Natural killer cell (primary cell): ENCODE measurements at regions of chr17 and their contacts with region 1.

Region 1: GRCh38 chr17:8156246-8156992 is 4.2 kb upstream of the PER1 start:
- DNase-seq: peak; percentile 100
- ATAC-seq: peak; percentile 65 to 92 (median 76)
- H3K4me3 ChIP-seq: peak overlapping the region; percentile 47
- H3K4me3 Mint-ChIP-seq: no peak overlapping the region
- H3K27ac ChIP-seq: peak overlapping the region; percentile 100
- H3K27ac Mint-ChIP-seq: no peak overlapping the region
- H3K4me1 ChIP-seq: peaks cover 90% of the 10 kb centered on the region
- H3K4me1 Mint-ChIP-seq: peaks cover 33 to 54% of the 10 kb centered on the region in 2 donors
- H3K27me3 ChIP-seq: no peaks in the 10 kb centered on the region
- H3K27me3 Mint-ChIP-seq: no peaks in the 10 kb centered on the region
- CTCF ChIP-seq: no peak

Region 2: DNA sequence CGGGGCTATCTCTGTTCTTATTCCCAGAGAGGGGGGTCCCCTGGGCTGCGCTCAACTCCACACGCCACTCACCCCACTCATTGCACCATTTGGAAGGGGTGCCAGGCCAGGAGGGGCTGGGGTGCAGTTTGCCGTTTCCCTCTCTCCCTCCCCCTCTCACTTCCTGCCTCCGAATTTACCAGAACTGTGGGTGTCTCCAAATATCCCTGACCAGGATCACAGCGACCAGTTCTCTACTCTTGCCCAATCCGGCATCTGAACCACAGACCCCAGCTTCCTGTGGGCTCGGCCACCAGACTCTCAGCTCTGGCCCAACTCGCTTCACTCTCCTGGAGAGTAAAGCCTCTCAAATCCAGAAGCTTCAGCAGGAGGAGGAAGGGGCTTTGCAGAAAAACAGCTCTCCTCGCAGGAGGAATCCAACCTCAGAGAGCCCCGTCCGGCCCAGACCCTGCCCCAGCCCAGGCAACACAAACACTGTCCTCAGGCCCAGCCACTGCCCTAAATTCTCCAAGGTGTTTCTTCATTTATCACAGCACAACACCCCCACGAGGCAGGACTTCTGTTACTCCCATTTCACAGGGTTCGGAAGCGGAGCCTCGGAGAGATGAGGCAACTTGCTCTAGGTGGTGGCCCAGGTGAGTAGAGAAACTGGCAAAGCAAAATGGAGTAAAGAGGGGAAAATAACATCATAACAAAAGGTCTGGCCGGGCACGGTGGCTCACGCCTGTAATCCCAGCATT is 1041.4 kb before region 1 on chr17:
- intact Hi-C with region 1: no loop called
- DNase-seq: no peak
- ATAC-seq: peak in 2 of 3 donors; percentile 26 to 36
- H3K4me3 ChIP-seq: no peak overlapping the region
- H3K4me3 Mint-ChIP-seq: no peak overlapping the region
- H3K27ac ChIP-seq: no peak overlapping the region
- H3K27ac Mint-ChIP-seq: no peak overlapping the region
- H3K4me1 ChIP-seq: peaks cover 21% of the 10 kb centered on the region
- H3K4me1 Mint-ChIP-seq: peaks cover 7 to 12% of the 10 kb centered on the region in 2 donors
- H3K27me3 ChIP-seq: no peaks in the 10 kb centered on the region
- H3K27me3 Mint-ChIP-seq: peaks cover 5 to 9% of the 10 kb centered on the region in 2 donors
- CTCF ChIP-seq: no peak

Region 3: GRCh38 chr17:8091033-8091687 is 65.3 kb before region 1 on chr17:
- intact Hi-C with region 1: loop called (anchors 1 kb)
- DNase-seq: no peak
- ATAC-seq: no peak
- H3K4me3 ChIP-seq: no peak overlapping the region
- H3K4me3 Mint-ChIP-seq: no peak overlapping the region
- H3K27ac ChIP-seq: no peak overlapping the region
- H3K27ac Mint-ChIP-seq: no peak overlapping the region
- H3K4me1 ChIP-seq: peaks cover 10% of the 10 kb centered on the region
- H3K4me1 Mint-ChIP-seq: peaks cover 4% of the 10 kb centered on the region in 2 donors
- H3K27me3 ChIP-seq: no peaks in the 10 kb centered on the region
- H3K27me3 Mint-ChIP-seq: peaks cover 23 to 38% of the 10 kb centered on the region in 2 donors
- CTCF ChIP-seq: no peak

Region 4: GRCh38 chr17:8118769-8119580 is 37.4 kb before region 1 on chr17:
- intact Hi-C with region 1: loop called (anchors 1 kb)
- DNase-seq: peak; percentile 84 to 90
- ATAC-seq: peak; percentile 62 to 79 (median 68)
- H3K4me3 ChIP-seq: peak overlapping the region; percentile 91
- H3K4me3 Mint-ChIP-seq: peak overlapping the region; percentile 93
- H3K27ac ChIP-seq: peak overlapping the region; percentile 76
- H3K27ac Mint-ChIP-seq: peak overlapping the region; percentile 98 to 100
- H3K4me1 ChIP-seq: peaks cover 57% of the 10 kb centered on the region
- H3K4me1 Mint-ChIP-seq: peaks cover 55 to 56% of the 10 kb centered on the region in 2 donors
- H3K27me3 ChIP-seq: peaks cover 48% of the 10 kb centered on the region
- H3K27me3 Mint-ChIP-seq: peaks cover 51 to 55% of the 10 kb centered on the region in 2 donors
- CTCF ChIP-seq: peak; percentile 89

Region 5: DNA sequence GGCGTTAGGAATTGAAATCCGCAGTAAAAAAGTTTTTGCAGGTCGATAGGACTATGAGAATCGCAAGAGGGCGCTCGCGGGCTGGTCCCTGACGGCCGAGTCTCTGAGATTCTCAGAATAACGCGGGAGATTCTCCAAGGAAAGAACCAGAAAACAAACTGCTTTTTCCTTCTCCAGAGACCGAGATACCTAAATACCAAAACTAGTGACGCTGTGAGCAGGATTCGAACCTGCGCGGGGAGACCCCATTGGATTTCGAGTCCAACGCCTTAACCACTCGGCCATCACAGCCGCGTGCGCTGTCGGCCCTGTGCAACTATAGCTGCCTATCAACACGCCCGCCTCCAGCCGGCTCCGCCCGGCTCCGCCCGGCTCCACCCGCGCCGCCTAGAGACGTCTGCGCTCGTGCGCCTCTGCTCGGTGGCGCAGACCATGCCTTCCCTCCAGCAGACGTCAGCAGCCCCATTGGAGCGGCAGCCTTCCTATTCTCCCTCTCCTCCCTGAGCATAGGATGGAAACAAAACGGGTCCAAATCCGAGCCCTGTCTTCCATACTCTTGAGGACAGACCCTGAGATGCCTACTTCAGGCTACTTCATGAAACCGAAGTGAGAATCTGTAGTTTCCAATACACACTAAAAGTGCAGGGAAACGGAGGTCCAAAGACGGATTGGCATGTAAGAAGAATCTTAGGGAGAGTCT is 17.6 kb before region 1 on chr17:
- intact Hi-C with region 1: loop called (anchors 1 kb)
- DNase-seq: peak; percentile 96 to 98
- ATAC-seq: peak; percentile 83 to 96 (median 85)
- H3K4me3 ChIP-seq: peak overlapping the region; percentile 65
- H3K4me3 Mint-ChIP-seq: no peak overlapping the region
- H3K27ac ChIP-seq: peak overlapping the region; percentile 96
- H3K27ac Mint-ChIP-seq: no peak overlapping the region
- H3K4me1 ChIP-seq: peaks cover 28% of the 10 kb centered on the region
- H3K4me1 Mint-ChIP-seq: peaks cover 0 to 3% of the 10 kb centered on the region in 2 donors
- H3K27me3 ChIP-seq: no peaks in the 10 kb centered on the region
- H3K27me3 Mint-ChIP-seq: no peaks in the 10 kb centered on the region
- CTCF ChIP-seq: peak; percentile 93

Region 6: DNA sequence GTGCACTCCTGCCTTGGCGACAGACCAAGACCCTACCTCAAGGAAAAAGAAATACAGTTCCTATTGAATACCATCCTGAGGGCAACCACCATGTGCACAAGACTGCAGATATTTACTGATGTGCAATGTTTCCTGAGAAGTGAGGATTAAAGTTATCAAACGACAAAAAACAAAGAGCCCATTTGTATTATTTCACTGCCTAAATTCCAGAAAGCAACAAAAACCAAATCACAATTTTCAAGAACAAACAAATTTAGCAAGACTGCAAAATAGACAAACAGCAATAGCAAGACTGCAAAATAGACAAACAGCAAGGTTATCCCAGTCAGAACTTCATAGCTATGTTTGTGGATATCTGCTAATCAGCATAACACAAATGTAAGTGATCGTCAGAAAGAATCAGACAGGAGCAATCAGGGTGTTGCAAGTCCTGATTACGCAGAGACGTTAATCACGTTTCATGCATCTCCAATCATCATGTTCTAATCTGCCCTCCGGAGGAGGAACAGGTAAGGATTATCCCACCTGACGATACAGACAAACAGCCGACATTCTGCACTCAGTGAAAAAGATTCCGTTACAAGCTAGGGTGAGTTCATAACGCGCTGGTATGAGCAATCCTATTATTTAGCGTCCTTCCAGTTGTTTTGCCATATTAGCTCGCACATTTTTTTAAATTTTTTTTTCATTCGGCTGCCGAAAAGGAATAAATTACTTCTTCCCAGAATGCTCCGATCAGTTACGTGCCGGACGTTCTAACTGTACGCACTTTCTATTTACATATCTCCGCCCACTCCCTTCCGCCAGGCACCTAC is 16.8 kb after region 1 on chr17:
- intact Hi-C with region 1: loop called (anchors 2 kb)
- DNase-seq: peak; percentile 57 to 96
- ATAC-seq: peak; percentile 81 to 92 (median 82)
- H3K4me3 ChIP-seq: peak overlapping the region; percentile 49
- H3K4me3 Mint-ChIP-seq: peak overlapping the region; percentile 90
- H3K27ac ChIP-seq: peak overlapping the region; percentile 98
- H3K27ac Mint-ChIP-seq: peak overlapping the region; percentile 99
- H3K4me1 ChIP-seq: peaks cover 47% of the 10 kb centered on the region
- H3K4me1 Mint-ChIP-seq: peaks cover 34 to 43% of the 10 kb centered on the region in 2 donors
- H3K27me3 ChIP-seq: no peaks in the 10 kb centered on the region
- H3K27me3 Mint-ChIP-seq: no peaks in the 10 kb centered on the region
- CTCF ChIP-seq: no peak

Region 7: DNA sequence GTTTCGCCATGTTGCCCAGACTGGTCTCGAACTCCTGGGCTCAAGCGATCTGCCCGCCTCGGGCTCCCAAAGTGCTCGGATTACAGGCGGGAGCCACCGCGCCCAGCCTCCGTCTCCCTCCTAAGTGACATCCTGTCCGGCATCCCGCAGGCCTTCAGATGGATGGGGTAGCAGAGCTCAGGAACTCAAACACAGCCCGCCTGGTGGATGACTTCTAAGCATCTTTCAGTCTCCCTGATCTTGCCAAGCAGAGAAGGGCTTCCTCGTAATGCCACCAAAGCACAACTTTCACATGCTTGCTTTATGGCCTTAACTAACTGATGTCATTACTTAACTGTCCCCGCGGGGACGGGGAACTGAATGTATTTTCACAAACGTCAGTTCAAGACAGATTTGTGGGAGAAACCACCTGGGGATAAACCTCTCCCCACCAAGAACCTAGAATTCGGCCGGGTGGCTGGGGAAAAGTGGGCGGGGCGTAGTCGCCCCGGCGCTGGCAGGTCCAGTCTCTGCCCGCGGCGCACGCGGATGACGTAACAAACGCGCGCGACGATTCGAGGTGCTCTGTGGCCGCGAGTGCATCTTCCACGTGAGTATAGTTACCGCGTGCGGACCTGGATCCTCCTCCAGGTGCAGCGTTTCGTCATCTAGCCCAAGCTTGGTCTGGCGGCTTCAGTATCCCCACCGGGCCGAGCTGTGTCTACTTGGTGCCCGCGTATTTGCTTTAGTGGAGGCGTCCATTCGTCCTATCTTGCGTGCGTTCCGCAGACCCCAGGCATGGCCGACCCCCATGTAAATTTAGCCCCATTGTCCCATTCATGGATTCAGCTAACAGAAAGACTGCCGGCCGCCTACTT is 92.6 kb after region 1 on chr17 and contains the start of gene PFAS:
- intact Hi-C with region 1: loop called (anchors 2 kb)
- DNase-seq: peak; percentile 98 to 99
- ATAC-seq: peak; percentile 51 to 71 (median 63)
- H3K4me3 ChIP-seq: peak within 1 kb of the TSS; percentile 74
- H3K4me3 Mint-ChIP-seq: peak within 1 kb of the TSS; percentile 94
- H3K27ac ChIP-seq: peak within 1 kb of the TSS; percentile 99
- H3K27ac Mint-ChIP-seq: peak within 1 kb of the TSS; percentile 92 to 97
- H3K4me1 ChIP-seq: peaks cover 37% of the 10 kb centered on the region
- H3K4me1 Mint-ChIP-seq: peaks cover 33 to 51% of the 10 kb centered on the region in 2 donors
- H3K27me3 ChIP-seq: no peaks in the 10 kb centered on the region
- H3K27me3 Mint-ChIP-seq: no peaks in the 10 kb centered on the region
- CTCF ChIP-seq: no peak
- total RNA-seq, gene PFAS: 23.6 to 30.0 (median 24.0) TPM

Region 8: DNA sequence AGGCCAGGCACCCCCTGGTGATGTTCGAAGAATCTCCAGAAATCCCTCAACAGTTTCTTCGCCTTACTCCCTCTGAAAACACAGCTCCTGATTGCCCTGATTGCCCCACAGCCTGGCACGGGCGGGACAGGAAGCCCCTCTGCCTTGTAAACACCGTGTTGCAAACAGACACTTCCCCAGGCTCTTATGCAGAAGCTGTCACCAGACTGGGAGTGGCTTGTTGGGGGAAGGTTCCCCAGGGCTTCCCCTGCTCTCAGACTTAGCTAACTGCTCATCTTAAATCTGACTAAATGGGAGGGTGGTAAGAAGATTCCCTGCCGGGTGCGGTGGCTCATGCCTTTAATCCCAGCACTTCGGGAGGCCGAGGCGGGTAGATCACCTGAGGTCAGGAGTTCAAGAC is 797.9 kb after region 1 on chr17:
- intact Hi-C with region 1: loop called (anchors 10 kb)
- DNase-seq: peak; percentile 79 to 95
- ATAC-seq: peak; percentile 77 to 95 (median 87)
- H3K4me3 ChIP-seq: no peak overlapping the region
- H3K4me3 Mint-ChIP-seq: peak overlapping the region; percentile 93
- H3K27ac ChIP-seq: peak overlapping the region; percentile 81
- H3K27ac Mint-ChIP-seq: peak overlapping the region in 1 of 2 donors; percentile 89
- H3K4me1 ChIP-seq: peaks cover 76% of the 10 kb centered on the region
- H3K4me1 Mint-ChIP-seq: peaks cover 96 to 98% of the 10 kb centered on the region in 2 donors
- H3K27me3 ChIP-seq: no peaks in the 10 kb centered on the region
- H3K27me3 Mint-ChIP-seq: no peaks in the 10 kb centered on the region
- CTCF ChIP-seq: no peak